Tibial artery (tissue), 4 donors: ENCODE measurements at regions of chr22 and their contacts with region 1.

Region 1: DNA sequence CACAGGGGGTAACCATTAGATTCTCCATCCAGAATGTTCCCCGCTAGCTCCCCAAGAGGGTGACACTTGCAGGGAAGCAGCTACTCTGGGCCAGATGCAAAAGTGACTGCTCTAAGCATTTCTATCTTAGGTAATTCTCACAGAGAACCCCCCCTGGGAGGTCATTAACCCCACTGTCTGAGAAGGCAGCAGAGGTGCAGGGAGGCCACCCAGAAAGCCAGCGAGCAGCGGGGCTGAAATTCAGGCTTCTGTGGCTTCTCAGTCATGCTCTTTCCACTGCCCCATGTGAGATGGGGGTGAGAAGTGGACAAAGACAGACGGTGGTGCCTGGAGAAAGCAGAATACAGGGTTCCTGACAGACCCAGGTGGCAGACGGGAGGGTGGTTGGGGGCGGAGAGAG is 114.4 kb upstream of the ASPHD2 start:
- DNase-seq: no peak
- H3K4me3 ChIP-seq: no peak overlapping the region
- H3K27ac ChIP-seq: no peak overlapping the region
- H3K4me1 ChIP-seq: no peaks in the 10 kb centered on the region
- H3K27me3 ChIP-seq: peaks cover 0 to 31% of the 10 kb centered on the region in 2 donors
- CTCF ChIP-seq: no peak

Region 2: GRCh38 chr22:26182723-26183122 is 131.9 kb before region 1 on chr22:
- intact Hi-C with region 1: no loop called
- DNase-seq: no peak
- H3K4me3 ChIP-seq: no peak overlapping the region
- H3K27ac ChIP-seq: no peak overlapping the region
- H3K4me1 ChIP-seq: no peaks in the 10 kb centered on the region
- H3K27me3 ChIP-seq: peaks cover 0 to 15% of the 10 kb centered on the region in 2 donors
- CTCF ChIP-seq: no peak

Region 3: DNA sequence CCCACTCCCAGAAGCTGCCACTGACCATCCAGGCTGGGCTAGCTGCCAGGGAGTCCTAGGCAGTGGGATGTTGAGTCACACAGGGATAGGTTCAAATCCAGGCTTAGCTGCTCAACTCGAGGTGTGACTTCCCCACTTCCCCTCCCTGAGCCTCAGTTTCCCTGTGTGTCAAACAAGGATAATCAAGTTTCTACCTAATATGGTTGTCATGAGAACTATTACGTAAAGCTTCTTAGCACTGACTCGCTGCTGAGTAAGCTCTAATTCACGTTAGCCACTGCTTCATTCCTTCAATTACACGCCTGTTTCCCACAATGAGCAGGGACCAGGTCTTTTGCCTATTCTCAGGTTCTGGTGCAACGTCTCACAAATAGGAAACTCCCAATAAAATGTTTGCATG is 77.7 kb before region 1 on chr22:
- intact Hi-C with region 1: loop called (anchors 2 kb)
- DNase-seq: no peak
- H3K4me3 ChIP-seq: no peak overlapping the region
- H3K27ac ChIP-seq: no peak overlapping the region
- H3K4me1 ChIP-seq: no peaks in the 10 kb centered on the region
- H3K27me3 ChIP-seq: peaks cover 0 to 25% of the 10 kb centered on the region in 2 donors
- CTCF ChIP-seq: no peak

Region 4: GRCh38 chr22:26740253-26740652 is 425.6 kb after region 1 on chr22:
- intact Hi-C with region 1: no loop called
- DNase-seq: no peak
- H3K4me3 ChIP-seq: no peak overlapping the region
- H3K27ac ChIP-seq: no peak overlapping the region
- H3K4me1 ChIP-seq: no peaks in the 10 kb centered on the region
- H3K27me3 ChIP-seq: no peaks in the 10 kb centered on the region
- CTCF ChIP-seq: no peak